Heart left ventricle (tissue), 16 donors: ENCODE measurements at regions of chr7 and their contacts with region 1.

Region 1: GRCh38 chr7:77542409-77542808 is 5.3 kb downstream of the PTPN12 start:
- DNase-seq: no peak
- ATAC-seq: no peak
- H3K4me3 ChIP-seq: no peak overlapping the region
- H3K27ac ChIP-seq: peak overlapping the region in 1 of 12 donors; percentile 5
- H3K4me1 ChIP-seq: peaks cover 11 to 83% (median 55%) of the 10 kb centered on the region in 12 donors
- H3K27me3 ChIP-seq: no peaks in the 10 kb centered on the region
- CTCF ChIP-seq: no peak
- POLR2A ChIP-seq: no peak

Region 2: GRCh38 chr7:77570330-77571011 is 28.1 kb after region 1 on chr7:
- intact Hi-C with region 1: loop called in 3 of 10 experiments (anchors 5 kb)
- DNase-seq: no peak
- ATAC-seq: peak in 3 of 4 donors; percentile 53 to 73 (median 68)
- H3K4me3 ChIP-seq: no peak overlapping the region
- H3K27ac ChIP-seq: peak overlapping the region in 1 of 12 donors; percentile 76
- H3K4me1 ChIP-seq: peaks cover 0 to 57% (median 15%) of the 10 kb centered on the region in 12 donors
- H3K27me3 ChIP-seq: no peaks in the 10 kb centered on the region
- CTCF ChIP-seq: no peak
- POLR2A ChIP-seq: no peak

Region 3: DNA sequence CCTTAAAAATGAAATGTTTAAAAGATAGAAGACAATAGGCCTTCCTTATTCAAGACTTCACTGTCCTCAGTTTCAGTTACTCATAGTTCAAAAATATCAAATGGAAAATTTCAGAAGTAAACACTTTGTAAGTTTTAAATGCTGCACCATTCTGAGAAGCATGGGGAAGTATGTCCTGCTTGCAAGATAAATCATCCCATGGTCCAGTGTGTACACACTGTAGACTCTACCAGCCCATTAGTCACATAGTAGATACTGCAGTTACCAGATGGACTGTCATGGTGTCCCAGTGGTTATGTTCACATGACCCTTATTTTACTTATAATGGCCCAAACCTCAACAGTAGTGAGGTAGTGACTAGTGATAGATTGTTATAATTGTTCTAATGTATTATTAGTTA is 64.2 kb after region 1 on chr7:
- intact Hi-C with region 1: loop called in 1 of 10 experiments (anchors 10 kb)
- DNase-seq: no peak
- ATAC-seq: no peak
- H3K4me3 ChIP-seq: no peak overlapping the region
- H3K27ac ChIP-seq: no peak overlapping the region
- H3K4me1 ChIP-seq: no peaks in the 10 kb centered on the region
- H3K27me3 ChIP-seq: no peaks in the 10 kb centered on the region
- CTCF ChIP-seq: no peak
- POLR2A ChIP-seq: no peak

Region 4: GRCh38 chr7:77644774-77645173 is 102.4 kb after region 1 on chr7:
- intact Hi-C with region 1: no loop called
- DNase-seq: no peak
- ATAC-seq: no peak
- H3K4me3 ChIP-seq: no peak overlapping the region
- H3K27ac ChIP-seq: no peak overlapping the region
- H3K4me1 ChIP-seq: peaks cover 0 to 4% (median 0%) of the 10 kb centered on the region in 12 donors
- H3K27me3 ChIP-seq: no peaks in the 10 kb centered on the region
- CTCF ChIP-seq: no peak
- POLR2A ChIP-seq: no peak

Region 5: DNA sequence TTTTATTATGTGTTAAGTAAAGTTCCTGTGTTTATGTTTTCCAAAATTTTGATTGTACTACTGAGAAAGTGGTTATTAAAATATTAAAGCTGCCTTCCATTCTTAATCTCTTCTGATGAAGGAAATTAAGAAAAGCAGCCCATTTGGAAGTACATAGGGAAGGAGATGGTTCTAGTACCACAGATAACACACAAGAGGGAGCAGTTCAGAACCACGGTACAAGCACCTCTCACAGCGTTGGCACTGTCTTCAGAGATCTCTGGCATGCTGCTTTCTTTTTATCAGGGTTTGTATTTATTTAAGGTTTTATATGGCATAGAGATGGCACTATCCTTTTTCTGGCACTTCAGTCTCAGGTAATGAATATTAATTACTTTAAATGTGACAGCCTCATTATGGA is 367.7 kb after region 1 on chr7:
- intact Hi-C with region 1: no loop called
- DNase-seq: no peak
- ATAC-seq: no peak
- H3K4me3 ChIP-seq: no peak overlapping the region
- H3K27ac ChIP-seq: no peak overlapping the region
- H3K4me1 ChIP-seq: peaks cover 0 to 14% (median 1%) of the 10 kb centered on the region in 12 donors
- H3K27me3 ChIP-seq: no peaks in the 10 kb centered on the region
- CTCF ChIP-seq: no peak
- POLR2A ChIP-seq: no peak